Heart left ventricle (tissue), 16 donors: ENCODE measurements at regions of chr6 and their contacts with region 1.

Region 1: DNA sequence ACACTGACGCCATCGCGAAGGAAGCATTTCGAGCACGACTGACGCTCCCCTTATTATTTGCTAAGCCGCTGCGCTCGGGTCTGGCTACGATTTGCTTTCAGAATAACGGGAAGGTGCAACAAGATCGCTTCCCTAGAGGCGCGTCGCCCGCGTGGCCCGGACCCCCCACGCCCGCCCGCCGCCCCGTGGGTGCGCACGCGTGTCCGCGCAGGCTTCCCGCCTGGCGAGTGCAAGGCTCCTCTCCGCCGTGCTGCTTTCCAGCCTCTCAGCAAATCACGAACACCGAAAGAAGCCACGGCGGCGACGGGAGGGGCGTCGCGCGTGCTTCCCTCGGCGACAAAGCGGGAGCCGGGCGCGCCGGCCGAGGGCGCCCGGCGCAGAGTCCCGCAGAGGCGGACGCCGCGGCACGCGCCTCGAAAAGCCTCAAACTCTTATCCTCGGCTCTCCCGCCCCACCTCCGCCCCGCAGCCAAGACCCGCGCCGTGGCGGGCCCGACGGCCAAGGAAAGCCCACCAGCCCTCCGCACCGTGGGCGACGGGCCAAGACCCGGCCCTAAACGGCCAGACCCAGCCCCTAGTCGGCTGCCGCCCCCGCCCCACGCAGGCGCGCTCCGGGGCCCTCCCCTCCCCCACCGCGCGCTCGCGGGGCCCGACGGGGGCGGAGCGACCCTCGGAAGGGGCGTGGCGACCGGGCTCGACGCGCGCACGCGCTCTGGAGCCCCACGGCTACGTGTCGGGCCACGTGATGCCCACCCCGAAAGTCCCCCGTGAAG is 987 bp upstream of the QKI start:
- DNase-seq: peak; percentile 90 to 95 (median 93)
- ATAC-seq: peak; percentile 71 to 93 (median 90)
- H3K4me3 ChIP-seq: peak overlapping the region; percentile 69 to 93 (median 78)
- H3K27ac ChIP-seq: peak overlapping the region; percentile 95 to 100 (median 99)
- H3K4me1 ChIP-seq: peaks cover 0 to 26% (median 6%) of the 10 kb centered on the region in 12 donors
- H3K27me3 ChIP-seq: no peaks in the 10 kb centered on the region
- CTCF ChIP-seq: no peak
- POLR2A ChIP-seq: peak in 1 of 2 donors; percentile 83

Region 2: DNA sequence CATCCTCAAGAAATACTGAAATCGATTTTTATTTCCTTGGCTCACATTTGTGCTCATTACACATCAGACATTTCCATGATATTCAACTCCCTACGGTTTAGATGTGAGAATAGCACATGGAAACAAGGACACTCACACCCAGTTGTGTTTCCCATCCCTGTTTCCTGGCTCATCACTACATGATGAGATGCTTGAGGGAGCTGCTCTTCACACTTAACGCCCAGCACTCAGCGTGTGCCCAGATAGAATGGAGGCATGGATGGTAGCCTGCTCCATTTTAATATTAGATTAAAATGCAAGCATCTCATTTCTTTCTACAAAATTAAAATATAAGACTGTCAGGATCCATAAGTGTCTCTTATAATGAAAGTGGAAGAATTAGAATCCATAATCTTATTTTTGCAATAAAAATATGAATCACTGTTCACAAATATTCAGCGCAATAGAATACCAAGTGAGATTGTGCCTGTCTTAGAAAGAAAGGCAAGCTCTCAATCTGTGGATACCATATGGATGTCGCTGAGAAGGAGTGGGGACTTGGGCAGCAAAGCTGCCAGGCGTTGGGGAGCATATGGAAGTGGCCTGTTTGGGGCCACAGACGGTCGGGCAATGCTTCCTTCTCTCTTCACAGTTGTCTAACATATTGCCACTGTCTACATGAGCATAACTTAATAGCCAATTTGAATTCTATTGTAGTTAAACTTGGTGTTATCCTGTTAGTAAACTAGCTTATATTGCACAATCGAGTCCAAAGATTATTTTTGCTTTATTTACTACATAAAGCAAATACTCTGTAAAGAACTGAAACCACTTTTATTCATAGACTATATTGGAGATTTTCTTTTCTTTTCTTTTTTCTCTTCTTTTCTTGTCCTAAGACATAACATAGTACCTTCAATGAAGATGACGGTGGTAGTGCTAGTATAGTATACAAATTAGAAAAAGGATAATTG is 205.8 kb before region 1 on chr6:
- intact Hi-C with region 1: loop called in 3 of 10 experiments (anchors 5 kb)
- DNase-seq: no peak
- ATAC-seq: no peak
- H3K4me3 ChIP-seq: no peak overlapping the region
- H3K27ac ChIP-seq: peak overlapping the region in 6 of 12 donors; percentile 22 to 91 (median 81)
- H3K4me1 ChIP-seq: peaks cover 0 to 7% (median 0%) of the 10 kb centered on the region in 12 donors
- H3K27me3 ChIP-seq: no peaks in the 10 kb centered on the region
- CTCF ChIP-seq: no peak
- POLR2A ChIP-seq: no peak

Region 3: GRCh38 chr6:163296835-163297519 is 116.6 kb before region 1 on chr6:
- intact Hi-C with region 1: loop called in 2 of 10 experiments (anchors 5 to 10 kb)
- DNase-seq: peak in 1 of 5 donors; percentile 55
- ATAC-seq: peak; percentile 63 to 90 (median 84)
- H3K4me3 ChIP-seq: no peak overlapping the region
- H3K27ac ChIP-seq: peak overlapping the region; percentile 8 to 76 (median 52)
- H3K4me1 ChIP-seq: peaks cover 0 to 27% (median 8%) of the 10 kb centered on the region in 12 donors
- H3K27me3 ChIP-seq: no peaks in the 10 kb centered on the region
- CTCF ChIP-seq: no peak
- POLR2A ChIP-seq: no peak

Region 4: GRCh38 chr6:163460307-163460782 is 46.8 kb after region 1 on chr6:
- intact Hi-C with region 1: no loop called
- DNase-seq: no peak
- ATAC-seq: peak in 3 of 4 donors; percentile 15 to 20 (median 16)
- H3K4me3 ChIP-seq: peak overlapping the region in 10 of 12 donors; percentile 9 to 58 (median 40)
- H3K27ac ChIP-seq: peak overlapping the region in 11 of 12 donors; percentile 8 to 71 (median 32)
- H3K4me1 ChIP-seq: peaks cover 22 to 100% (median 95%) of the 10 kb centered on the region in 12 donors
- H3K27me3 ChIP-seq: no peaks in the 10 kb centered on the region
- CTCF ChIP-seq: no peak
- POLR2A ChIP-seq: no peak

Region 5: GRCh38 chr6:163711615-163712565 is 298.4 kb after region 1 on chr6:
- intact Hi-C with region 1: loop called in 4 of 10 experiments (anchors 5 kb)
- DNase-seq: peak; percentile 80 to 91 (median 84)
- ATAC-seq: peak; percentile 71 to 80 (median 77)
- H3K4me3 ChIP-seq: peak overlapping the region in 1 of 12 donors; percentile 12
- H3K27ac ChIP-seq: peak overlapping the region; percentile 67 to 88 (median 78)
- H3K4me1 ChIP-seq: peaks cover 24 to 63% (median 61%) of the 10 kb centered on the region in 12 donors
- H3K27me3 ChIP-seq: no peaks in the 10 kb centered on the region
- CTCF ChIP-seq: peak in 11 of 12 donors; percentile 20 to 59 (median 41)
- POLR2A ChIP-seq: no peak

Region 6: DNA sequence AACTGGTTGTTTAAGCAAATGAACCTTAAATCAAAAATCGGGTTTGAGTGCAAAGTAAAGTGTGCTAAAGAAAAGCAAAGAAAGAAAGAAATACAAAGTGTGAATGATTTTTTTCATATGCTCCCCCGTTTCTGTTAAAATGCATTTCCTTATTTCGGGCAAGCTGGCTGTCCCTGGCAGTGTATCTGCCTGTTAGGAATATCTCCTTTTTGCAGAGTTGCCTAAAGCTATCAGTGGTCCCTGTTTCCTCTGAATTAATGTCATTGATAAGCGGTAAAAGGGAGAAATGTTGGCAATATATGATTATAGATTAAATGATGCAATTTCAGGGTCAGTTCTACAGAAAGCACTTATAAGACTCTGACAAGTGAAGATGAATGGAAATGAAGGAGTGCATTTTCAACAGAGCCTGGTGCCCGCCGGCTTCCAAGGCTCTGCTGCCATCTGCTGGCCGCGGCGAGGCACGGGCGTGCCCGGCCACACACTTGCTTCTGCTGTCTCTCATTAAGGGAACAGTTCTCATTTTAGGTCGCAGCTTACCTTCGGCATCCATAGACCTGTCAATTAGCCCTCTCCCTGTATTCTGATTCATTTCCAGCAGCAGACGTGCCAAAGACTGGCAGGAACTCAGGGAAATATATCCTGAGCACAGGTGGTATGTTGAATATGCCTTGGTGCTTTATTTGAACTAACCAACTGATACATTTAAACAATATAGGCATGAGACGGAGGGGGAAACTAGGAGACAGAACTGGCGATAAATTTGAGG is 1513.9 kb after region 1 on chr6:
- intact Hi-C with region 1: loop called in 2 of 10 experiments (anchors 5 to 10 kb)
- DNase-seq: peak; percentile 61 to 85 (median 61)
- ATAC-seq: peak; percentile 83 to 96 (median 92)
- H3K4me3 ChIP-seq: peak overlapping the region in 3 of 12 donors; percentile 8 to 28 (median 18)
- H3K27ac ChIP-seq: no peak overlapping the region
- H3K4me1 ChIP-seq: peaks cover 0 to 8% (median 2%) of the 10 kb centered on the region in 12 donors
- H3K27me3 ChIP-seq: no peaks in the 10 kb centered on the region
- CTCF ChIP-seq: peak; percentile 93 to 100 (median 98)
- POLR2A ChIP-seq: no peak